ENCODE measurements at regions of chr2 and their contacts with region 1.

Region 1: DNA sequence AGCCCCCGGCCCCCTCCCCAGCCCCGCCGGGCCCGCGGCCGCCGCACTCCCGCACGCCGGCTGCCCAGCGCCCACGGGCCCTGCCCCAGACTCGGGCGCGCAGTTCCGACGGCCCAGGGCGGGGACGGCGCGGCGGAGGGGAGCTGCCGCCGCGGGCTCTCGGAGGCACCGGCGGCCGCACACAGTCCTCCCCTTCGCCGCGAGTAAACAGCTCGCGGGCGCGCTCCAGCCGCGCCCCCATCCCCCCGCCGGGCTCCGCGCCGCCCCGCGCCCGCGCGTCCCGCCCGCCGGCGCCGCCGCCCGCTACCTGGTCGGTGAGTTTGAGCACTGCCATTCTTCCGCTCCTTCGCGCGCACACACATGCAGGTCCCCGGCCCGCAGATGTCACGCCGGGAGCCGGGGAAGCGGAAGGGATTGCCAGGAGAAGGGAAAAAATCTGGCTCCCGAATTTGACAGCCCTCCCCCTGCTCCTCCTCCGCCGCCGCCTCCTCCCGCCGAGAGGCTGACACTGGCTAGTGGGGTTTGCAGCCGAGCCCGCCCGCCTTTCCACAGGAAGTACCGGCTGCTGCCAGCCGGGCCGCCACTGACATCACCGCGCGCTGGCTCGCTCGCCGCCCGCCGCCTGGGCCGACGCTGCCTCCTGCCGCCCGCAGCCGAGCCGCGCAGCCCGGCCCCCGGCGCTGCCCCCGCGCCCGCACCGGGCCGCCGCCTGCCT is at the start of gene ANKRD44:
- DNase-seq: peak; percentile 93
- ATAC-seq: peak; percentile 69
- H3K4me3 Mint-ChIP-seq: peak within 1 kb of the TSS; percentile 93
- H3K27ac Mint-ChIP-seq: peak within 1 kb of the TSS; percentile 98
- H3K4me1 Mint-ChIP-seq: peaks cover 67% of the 10 kb centered on the region
- H3K27me3 Mint-ChIP-seq: no peaks in the 10 kb centered on the region
- total RNA-seq, gene ANKRD44: 122 to 181 TPM

Region 2: DNA sequence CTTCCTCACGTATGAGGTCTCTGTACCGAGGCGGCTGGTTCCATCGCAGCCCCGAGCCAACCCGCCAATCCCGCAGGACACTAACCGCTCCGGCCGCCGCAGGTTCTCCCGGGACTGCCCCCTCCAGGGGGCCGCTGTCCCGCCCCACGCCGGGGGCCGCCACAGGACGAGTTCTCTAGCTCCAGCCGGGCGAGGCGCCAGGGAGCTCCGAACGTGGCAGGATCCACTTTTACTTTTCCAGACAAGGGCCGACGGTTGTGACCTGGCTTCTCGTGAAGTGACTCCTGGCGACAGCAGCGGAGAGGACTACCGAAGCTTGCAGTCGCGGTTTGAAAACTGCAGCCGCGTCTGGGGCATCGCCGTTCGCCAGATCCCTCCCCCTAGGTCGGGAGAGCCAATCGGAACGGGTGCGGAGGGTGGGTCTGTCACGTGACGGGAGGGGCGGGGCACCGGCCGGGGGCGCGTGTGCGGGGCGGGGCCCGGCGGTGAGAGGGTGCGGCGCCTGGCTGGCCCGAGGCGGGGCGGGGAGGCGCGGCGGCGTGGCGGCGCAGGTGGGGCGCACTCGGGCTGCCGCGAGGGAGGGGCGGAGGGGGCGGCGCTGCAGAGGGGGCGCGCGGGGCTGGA is 1139.1 kb before region 1 on chr2 and contains the start of gene STK17B:
- CTCF ChIA-PET with region 1: no interaction called
- POLR2A ChIA-PET with region 1: no interaction called
- intact Hi-C with region 1: loop called (anchors 5 to 10 kb)
- DNase-seq: peak; percentile 99
- ATAC-seq: peak; percentile 76
- H3K4me3 Mint-ChIP-seq: peak within 1 kb of the TSS; percentile 92
- H3K27ac Mint-ChIP-seq: peak within 1 kb of the TSS; percentile 98
- H3K4me1 Mint-ChIP-seq: peaks cover 38% of the 10 kb centered on the region
- H3K27me3 Mint-ChIP-seq: no peaks in the 10 kb centered on the region
- total RNA-seq, gene STK17B: 159 to 178 TPM

Region 3: DNA sequence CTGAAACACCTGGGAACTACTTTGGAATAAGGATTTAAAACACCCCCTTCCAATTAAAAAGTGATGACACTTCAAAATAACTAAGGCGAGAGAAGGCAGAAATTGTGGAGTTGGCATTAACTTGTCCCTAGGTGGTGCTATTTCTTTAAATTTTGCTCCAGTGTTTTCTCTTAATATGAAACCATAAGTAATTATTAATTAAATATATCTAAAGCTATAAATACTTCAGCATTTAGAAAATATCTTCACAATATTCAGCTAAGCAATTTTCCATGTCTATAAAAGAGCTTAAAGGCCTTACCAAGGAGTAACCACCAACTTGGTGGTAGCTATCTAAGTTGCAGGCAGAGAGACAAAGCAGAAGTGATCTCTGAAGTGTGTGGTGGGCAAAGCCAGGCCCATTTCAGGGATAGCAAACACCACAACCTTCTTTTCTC is 197.1 kb before region 1 on chr2:
- CTCF ChIA-PET with region 1: interaction called, 32 read pairs
- POLR2A ChIA-PET with region 1: no interaction called
- intact Hi-C with region 1: loop called in 1 of 2 experiments (anchors 1 kb)
- DNase-seq: no peak
- ATAC-seq: peak; percentile 41
- H3K4me3 Mint-ChIP-seq: no peak overlapping the region
- H3K27ac Mint-ChIP-seq: peak overlapping the region; percentile 26
- H3K4me1 Mint-ChIP-seq: peaks cover 25% of the 10 kb centered on the region
- H3K27me3 Mint-ChIP-seq: no peaks in the 10 kb centered on the region

Region 4: GRCh38 chr2:197191177-197191939 is 119.1 kb before region 1 on chr2:
- CTCF ChIA-PET with region 1: interaction called, 53 read pairs
- POLR2A ChIA-PET with region 1: no interaction called
- intact Hi-C with region 1: loop called (anchors 1 kb)
- DNase-seq: no peak
- ATAC-seq: peak; percentile 54
- H3K4me3 Mint-ChIP-seq: peak overlapping the region; percentile 33
- H3K27ac Mint-ChIP-seq: peak overlapping the region; percentile 59
- H3K4me1 Mint-ChIP-seq: peaks cover 79% of the 10 kb centered on the region
- H3K27me3 Mint-ChIP-seq: no peaks in the 10 kb centered on the region

Region 5: DNA sequence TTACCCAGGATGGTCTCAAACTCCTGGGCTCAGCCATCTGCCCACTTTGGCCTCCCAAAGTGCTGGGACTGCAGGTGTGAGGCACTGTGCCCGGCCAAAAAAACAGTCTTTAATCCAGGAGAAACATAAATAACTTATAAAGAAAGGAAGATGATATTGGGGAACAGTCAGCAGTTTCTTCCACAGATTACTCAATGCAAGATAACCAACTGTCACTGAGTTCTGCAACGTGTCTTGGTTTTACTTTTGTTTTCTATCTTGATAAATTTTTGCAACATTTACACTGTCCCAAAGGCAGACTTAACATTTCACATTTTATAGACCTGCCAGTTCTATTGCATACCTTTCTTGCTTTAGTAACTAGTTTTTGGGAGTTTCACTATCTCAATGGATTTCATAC is 71.0 kb before region 1 on chr2:
- CTCF ChIA-PET with region 1: interaction called, 6 read pairs
- POLR2A ChIA-PET with region 1: interaction called, 13 read pairs
- intact Hi-C with region 1: loop called in 1 of 2 experiments (anchors 1 kb)
- DNase-seq: no peak
- ATAC-seq: peak; percentile 59
- H3K4me3 Mint-ChIP-seq: peak overlapping the region; percentile 75
- H3K27ac Mint-ChIP-seq: peak overlapping the region; percentile 92
- H3K4me1 Mint-ChIP-seq: peaks cover 87% of the 10 kb centered on the region
- H3K27me3 Mint-ChIP-seq: no peaks in the 10 kb centered on the region

Region 6: DNA sequence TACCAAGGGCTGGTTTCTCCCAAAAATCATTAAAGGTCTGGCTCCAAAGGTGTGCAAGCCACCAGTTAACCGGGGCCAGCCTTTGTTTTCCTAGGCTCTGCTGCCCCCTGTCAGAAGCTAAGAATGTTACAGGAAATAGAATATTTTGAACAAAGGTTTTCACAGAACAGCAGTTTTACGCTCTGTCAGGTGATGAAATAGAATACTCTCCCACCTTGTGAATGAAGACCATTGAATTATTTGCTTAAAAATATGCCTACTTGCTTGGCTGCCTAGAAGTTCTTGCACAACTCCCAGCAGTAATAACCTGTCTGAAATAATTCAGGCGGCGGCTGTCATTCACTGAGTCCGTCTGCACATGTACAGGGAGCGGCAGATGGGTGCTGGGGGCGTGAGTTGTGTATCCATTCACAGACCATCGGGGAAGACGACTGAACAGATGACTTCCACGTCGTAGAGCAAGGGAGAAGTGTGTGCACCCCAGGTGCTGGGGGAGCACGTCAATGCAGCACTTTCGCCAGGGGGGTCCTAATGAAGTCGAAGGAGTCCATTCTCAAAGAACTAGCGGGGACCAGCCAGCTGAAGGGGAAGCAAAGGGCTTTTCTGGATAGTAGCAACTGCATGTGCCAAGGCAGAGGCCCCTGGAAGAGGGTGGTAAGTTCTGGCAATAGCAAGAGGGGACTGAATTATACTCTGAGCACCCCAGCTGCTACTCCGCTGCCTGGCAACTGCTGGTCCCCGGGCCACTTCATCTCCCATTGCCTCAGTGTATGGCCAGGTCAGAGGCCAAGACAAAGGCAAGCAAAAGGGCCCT is 68.3 kb after region 1 on chr2:
- CTCF ChIA-PET with region 1: interaction called, 5 read pairs
- POLR2A ChIA-PET with region 1: interaction called, 6 read pairs
- intact Hi-C with region 1: loop called (anchors 1 to 5 kb)
- DNase-seq: peak; percentile 80
- ATAC-seq: peak; percentile 83
- H3K4me3 Mint-ChIP-seq: no peak overlapping the region
- H3K27ac Mint-ChIP-seq: no peak overlapping the region
- H3K4me1 Mint-ChIP-seq: peaks cover 19% of the 10 kb centered on the region
- H3K27me3 Mint-ChIP-seq: no peaks in the 10 kb centered on the region

Region 7: DNA sequence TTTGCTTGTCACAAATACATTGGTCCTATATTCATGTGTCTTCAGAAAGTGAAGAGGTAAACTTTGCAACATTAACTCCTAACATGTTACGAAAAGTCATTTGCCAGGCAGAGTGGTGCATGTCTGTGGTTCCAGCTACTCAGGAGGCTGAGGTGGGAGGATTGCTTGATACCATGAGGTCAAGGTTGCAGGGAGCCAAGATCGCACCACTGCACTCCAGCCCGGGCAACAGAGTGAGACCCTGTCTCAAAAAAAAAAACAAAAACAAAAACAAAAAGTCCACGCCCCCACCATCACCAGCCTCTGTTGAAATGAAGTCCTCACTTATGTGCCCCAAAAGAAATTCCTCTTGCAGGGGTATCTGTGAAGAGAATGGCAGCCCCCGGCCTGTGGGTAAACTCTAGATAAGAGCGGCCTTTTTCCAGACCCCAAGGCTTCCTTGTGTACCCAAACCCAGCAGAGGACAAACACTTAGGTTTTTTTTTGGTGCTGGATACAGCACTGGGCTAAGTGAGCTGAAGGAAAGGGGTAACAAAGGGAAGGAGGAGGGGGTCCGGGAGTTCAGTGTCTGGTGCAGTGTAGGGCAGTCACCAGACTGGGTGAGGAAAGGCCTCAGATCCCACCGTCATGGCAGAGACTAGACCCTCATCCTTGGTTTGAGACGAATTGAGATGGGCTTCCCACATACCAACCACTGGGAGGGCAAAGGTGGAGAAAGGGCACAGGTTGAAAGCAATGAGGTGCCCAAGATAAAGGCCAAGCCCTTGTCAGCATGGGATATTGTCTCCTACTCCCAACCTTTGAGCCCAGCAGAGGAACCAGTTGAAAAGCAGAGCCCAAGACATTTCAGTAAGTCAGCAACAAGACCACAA is 170.0 kb after region 1 on chr2:
- CTCF ChIA-PET with region 1: no interaction called
- POLR2A ChIA-PET with region 1: no interaction called
- intact Hi-C with region 1: no loop called
- DNase-seq: no peak
- ATAC-seq: no peak
- H3K4me3 Mint-ChIP-seq: no peak overlapping the region
- H3K27ac Mint-ChIP-seq: peak overlapping the region; percentile 48
- H3K4me1 Mint-ChIP-seq: peaks cover under 1% of the 10 kb centered on the region
- H3K27me3 Mint-ChIP-seq: no peaks in the 10 kb centered on the region

Region 8: DNA sequence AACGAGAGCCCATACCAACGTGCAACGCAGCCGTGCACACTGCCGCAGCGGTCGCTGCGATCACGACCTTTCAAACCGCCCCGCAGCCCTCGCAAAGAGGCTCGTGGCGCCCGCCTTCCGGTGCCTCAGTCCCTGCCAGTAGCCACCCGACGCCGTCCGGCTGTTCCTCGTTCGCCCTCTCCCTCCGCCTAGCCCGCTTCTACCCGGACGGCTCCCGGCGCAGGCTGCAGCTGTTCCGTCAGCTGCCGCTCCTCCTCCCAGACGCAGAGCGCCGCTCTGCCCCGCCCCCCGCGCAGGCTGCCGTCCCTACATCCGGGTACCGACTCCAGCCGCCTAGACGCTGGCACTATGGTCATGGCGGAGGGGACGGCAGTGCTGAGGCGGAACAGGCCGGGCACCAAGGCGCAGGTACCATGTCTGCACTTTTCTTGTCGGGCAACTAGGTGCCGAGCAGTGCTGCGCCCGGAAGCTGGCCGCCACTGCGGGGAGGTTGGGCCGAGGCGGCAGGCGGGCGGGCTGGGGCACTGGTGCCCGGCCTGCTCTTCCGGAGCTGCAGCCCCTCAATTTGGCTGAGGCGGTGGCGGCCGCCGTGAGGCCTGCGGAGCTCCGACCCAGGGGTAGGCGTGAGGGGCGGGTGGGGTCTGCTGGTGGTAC is 205.4 kb after region 1 on chr2 and contains the start of gene MOB4:
- CTCF ChIA-PET with region 1: no interaction called
- POLR2A ChIA-PET with region 1: no interaction called
- intact Hi-C with region 1: loop called in 1 of 2 experiments (anchors 5 kb)
- DNase-seq: peak; percentile 97
- ATAC-seq: peak; percentile 95
- H3K4me3 Mint-ChIP-seq: peak within 1 kb of the TSS; percentile 94
- H3K27ac Mint-ChIP-seq: peak within 1 kb of the TSS; percentile 96
- H3K4me1 Mint-ChIP-seq: peaks cover 21% of the 10 kb centered on the region
- H3K27me3 Mint-ChIP-seq: no peaks in the 10 kb centered on the region
- total RNA-seq, gene MOB4: 10.8 to 17.1 TPM

Measured in activated CD4-positive, alpha-beta T cell treated with anti-CD3 and anti-CD28 coated beads for 36 hours (primary cell).